Heart left ventricle (tissue), 16 donors: ENCODE measurements at regions of chr11 and their contacts with region 1.

Region 1: GRCh38 chr11:37450613-37451012 is 852.6 kb upstream of the RAG2 start:
- DNase-seq: no peak
- ATAC-seq: no peak
- H3K4me3 ChIP-seq: no peak overlapping the region
- H3K27ac ChIP-seq: no peak overlapping the region
- H3K4me1 ChIP-seq: no peaks in the 10 kb centered on the region
- H3K27me3 ChIP-seq: no peaks in the 10 kb centered on the region
- CTCF ChIP-seq: no peak
- POLR2A ChIP-seq: no peak

Region 2: DNA sequence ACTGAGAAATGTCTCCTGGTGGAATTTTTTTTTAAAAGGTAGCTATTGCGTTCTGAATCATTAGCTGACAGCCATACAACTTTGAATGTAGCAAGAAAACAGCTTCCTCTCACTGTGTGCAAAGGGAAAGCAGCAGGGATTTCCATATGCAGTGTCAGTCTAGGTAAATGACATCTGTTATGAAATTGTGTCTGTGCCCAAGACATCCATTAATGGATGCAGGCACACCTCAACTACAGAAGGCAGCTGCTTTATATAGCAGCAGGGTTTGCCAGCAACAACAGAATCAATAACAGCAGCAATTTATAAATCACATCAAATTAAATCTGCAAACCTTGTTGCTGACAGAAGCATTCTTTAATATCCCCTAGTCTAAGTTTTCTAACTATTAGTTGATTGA is 107.3 kb before region 1 on chr11:
- intact Hi-C with region 1: no loop called
- DNase-seq: no peak
- ATAC-seq: no peak
- H3K4me3 ChIP-seq: no peak overlapping the region
- H3K27ac ChIP-seq: no peak overlapping the region
- H3K4me1 ChIP-seq: no peaks in the 10 kb centered on the region
- H3K27me3 ChIP-seq: no peaks in the 10 kb centered on the region
- CTCF ChIP-seq: no peak
- POLR2A ChIP-seq: no peak

Region 3: GRCh38 chr11:37394236-37394870 is 56.3 kb before region 1 on chr11:
- intact Hi-C with region 1: loop called in 1 of 10 experiments (anchors 10 kb)
- DNase-seq: no peak
- ATAC-seq: no peak
- H3K4me3 ChIP-seq: no peak overlapping the region
- H3K27ac ChIP-seq: no peak overlapping the region
- H3K4me1 ChIP-seq: no peaks in the 10 kb centered on the region
- H3K27me3 ChIP-seq: no peaks in the 10 kb centered on the region
- CTCF ChIP-seq: no peak
- POLR2A ChIP-seq: no peak